B cell (primary cell): ENCODE measurements at regions of chr15 and their contacts with region 1.

Region 1: GRCh38 chr15:67456677-67457529 is 64.0 kb upstream of the C15orf61 start:
- DNase-seq: peak; percentile 83
- ATAC-seq: peak; percentile 99
- H3K4me3 ChIP-seq: no peak overlapping the region
- H3K4me3 Mint-ChIP-seq: no peak overlapping the region
- H3K27ac ChIP-seq: no peak overlapping the region
- H3K27ac Mint-ChIP-seq: no peak overlapping the region
- H3K4me1 ChIP-seq: peaks cover 0 to 3% of the 10 kb centered on the region in 2 donors
- H3K4me1 Mint-ChIP-seq: peaks cover 2% of the 10 kb centered on the region
- H3K27me3 ChIP-seq: peaks cover 0 to 3% (median 1%) of the 10 kb centered on the region in 4 experiments
- H3K27me3 Mint-ChIP-seq: peaks cover 7% of the 10 kb centered on the region
- CTCF ChIP-seq: peak; percentile 97

Region 2: DNA sequence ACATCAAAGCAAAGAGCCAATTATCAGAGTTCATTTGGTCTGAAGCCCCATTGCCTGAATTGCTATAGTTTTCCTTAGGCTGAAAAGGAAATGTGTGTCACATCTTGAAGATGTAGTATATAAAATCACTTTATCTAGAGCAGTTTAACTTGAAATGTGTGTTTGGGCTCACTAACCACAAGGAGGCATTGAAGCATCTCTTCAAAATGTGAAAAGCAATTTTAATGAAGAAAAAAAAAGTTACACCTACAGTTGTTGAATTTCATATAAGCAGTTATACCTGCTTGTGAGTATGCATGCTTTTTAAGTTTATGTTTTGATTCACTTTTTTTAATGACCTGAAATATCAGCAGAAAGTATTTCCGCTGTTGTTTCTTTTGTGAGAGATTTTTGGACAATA is 73.0 kb before region 1 on chr15:
- CTCF ChIA-PET with region 1: no interaction called
- POLR2A ChIA-PET with region 1: no interaction called
- intact Hi-C with region 1: no loop called
- DNase-seq: no peak
- ATAC-seq: no peak
- H3K4me3 ChIP-seq: no peak overlapping the region
- H3K4me3 Mint-ChIP-seq: no peak overlapping the region
- H3K27ac ChIP-seq: no peak overlapping the region
- H3K27ac Mint-ChIP-seq: no peak overlapping the region
- H3K4me1 ChIP-seq: no peaks in the 10 kb centered on the region
- H3K4me1 Mint-ChIP-seq: no peaks in the 10 kb centered on the region
- H3K27me3 ChIP-seq: no peaks in the 10 kb centered on the region
- H3K27me3 Mint-ChIP-seq: peaks cover 15% of the 10 kb centered on the region
- CTCF ChIP-seq: no peak

Region 3: DNA sequence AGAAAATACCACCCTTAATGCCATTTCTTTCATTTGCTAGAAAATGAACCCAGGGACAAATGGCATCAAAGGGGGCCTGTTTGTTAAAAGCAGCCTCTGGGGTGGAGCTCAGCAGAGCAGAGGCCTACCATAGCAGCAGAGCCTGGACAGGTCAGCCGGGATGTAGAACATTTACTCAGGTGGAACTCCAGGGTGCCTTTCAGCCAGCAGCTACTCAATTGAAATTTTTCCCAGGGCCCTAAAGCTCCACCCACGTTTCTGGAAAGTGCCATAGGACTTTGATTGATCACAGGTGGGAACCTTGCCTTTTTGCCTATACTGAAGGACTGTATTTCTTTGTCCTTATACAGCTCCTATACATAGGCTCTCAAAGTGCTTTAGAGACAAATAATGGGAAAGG is 10.5 kb before region 1 on chr15:
- CTCF ChIA-PET with region 1: interaction called, 12 read pairs
- POLR2A ChIA-PET with region 1: no interaction called
- intact Hi-C with region 1: no loop called
- DNase-seq: no peak
- ATAC-seq: no peak
- H3K4me3 ChIP-seq: no peak overlapping the region
- H3K4me3 Mint-ChIP-seq: no peak overlapping the region
- H3K27ac ChIP-seq: no peak overlapping the region
- H3K27ac Mint-ChIP-seq: no peak overlapping the region
- H3K4me1 ChIP-seq: no peaks in the 10 kb centered on the region
- H3K4me1 Mint-ChIP-seq: no peaks in the 10 kb centered on the region
- H3K27me3 ChIP-seq: no peaks in the 10 kb centered on the region
- H3K27me3 Mint-ChIP-seq: no peaks in the 10 kb centered on the region
- CTCF ChIP-seq: no peak

Region 4: GRCh38 chr15:67542420-67543347 is 85.8 kb after region 1 on chr15 and contains the start of gene MAP2K5:
- CTCF ChIA-PET with region 1: interaction called, 4 read pairs
- POLR2A ChIA-PET with region 1: no interaction called
- intact Hi-C with region 1: loop called (anchors 2 kb)
- DNase-seq: peak; percentile 85
- ATAC-seq: peak; percentile 80
- H3K4me3 ChIP-seq: peak within 1 kb of the TSS; percentile 78 to 99 (median 83)
- H3K4me3 Mint-ChIP-seq: peak within 1 kb of the TSS; percentile 91
- H3K27ac ChIP-seq: peak within 1 kb of the TSS; percentile 79 to 83
- H3K27ac Mint-ChIP-seq: peak within 1 kb of the TSS; percentile 93
- H3K4me1 ChIP-seq: peaks cover 25 to 28% of the 10 kb centered on the region in 2 donors
- H3K4me1 Mint-ChIP-seq: peaks cover 51% of the 10 kb centered on the region
- H3K27me3 ChIP-seq: peaks cover 0 to 6% (median 3%) of the 10 kb centered on the region in 4 experiments
- H3K27me3 Mint-ChIP-seq: peaks cover 5% of the 10 kb centered on the region
- CTCF ChIP-seq: no peak
- total RNA-seq, gene MAP2K5: 40.0 and 47.1 TPM in 2 replicates

Region 5: GRCh38 chr15:67833710-67834511 is 377.0 kb after region 1 on chr15:
- CTCF ChIA-PET with region 1: interaction called, 126 read pairs
- POLR2A ChIA-PET with region 1: no interaction called
- intact Hi-C with region 1: no loop called
- DNase-seq: peak; percentile 69
- ATAC-seq: peak; percentile 48
- H3K4me3 ChIP-seq: peak overlapping the region in 3 of 5 experiments; percentile 48 to 74 (median 58)
- H3K4me3 Mint-ChIP-seq: peak overlapping the region; percentile 88
- H3K27ac ChIP-seq: no peak overlapping the region
- H3K27ac Mint-ChIP-seq: peak overlapping the region; percentile 50
- H3K4me1 ChIP-seq: peaks cover 61 to 64% of the 10 kb centered on the region in 2 donors
- H3K4me1 Mint-ChIP-seq: peaks cover 65% of the 10 kb centered on the region
- H3K27me3 ChIP-seq: peaks cover 4 to 89% (median 60%) of the 10 kb centered on the region in 4 experiments
- H3K27me3 Mint-ChIP-seq: peaks cover 60% of the 10 kb centered on the region
- CTCF ChIP-seq: peak; percentile 40